Transverse colon (tissue), 4 donors: ENCODE measurements at regions of chr4 and their contacts with region 1.

Region 1: GRCh38 chr4:122341906-122342305 is 36.9 kb upstream of the ADAD1 start:
- DNase-seq: no peak
- H3K4me3 ChIP-seq: no peak overlapping the region
- H3K27ac ChIP-seq: no peak overlapping the region
- H3K4me1 ChIP-seq: no peaks in the 10 kb centered on the region
- H3K27me3 ChIP-seq: no peaks in the 10 kb centered on the region
- CTCF ChIP-seq: no peak
- EP300 ChIP-seq: no peak
- POLR2A ChIP-seq: no peak

Region 2: GRCh38 chr4:122246551-122246950 is 95.4 kb before region 1 on chr4:
- in situ Hi-C with region 1: loop called in 1 of 4 experiments (anchors 25 kb)
- intact Hi-C with region 1: no loop called
- DNase-seq: no peak
- H3K4me3 ChIP-seq: no peak overlapping the region
- H3K27ac ChIP-seq: no peak overlapping the region
- H3K4me1 ChIP-seq: no peaks in the 10 kb centered on the region
- H3K27me3 ChIP-seq: no peaks in the 10 kb centered on the region
- CTCF ChIP-seq: no peak
- EP300 ChIP-seq: no peak
- POLR2A ChIP-seq: no peak

Region 3: DNA sequence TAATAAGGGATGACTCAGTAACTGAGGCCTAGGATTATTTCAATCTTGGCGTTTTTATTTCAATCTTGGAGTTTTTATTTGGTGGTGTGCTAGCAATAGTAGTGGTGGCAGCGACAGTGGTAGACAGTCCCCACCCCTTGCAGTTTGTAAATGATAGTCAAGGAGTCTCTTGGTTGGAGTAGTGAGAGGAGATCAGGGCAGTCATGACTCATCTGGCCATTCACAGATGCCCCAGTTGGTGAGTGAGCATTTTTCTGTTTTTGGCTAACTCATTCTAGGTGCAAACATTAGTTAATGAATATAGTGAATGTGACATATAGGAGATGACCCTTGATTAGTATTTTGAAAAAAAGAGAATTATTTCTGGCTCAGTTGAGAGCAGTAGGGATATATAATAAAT is 56.6 kb before region 1 on chr4:
- in situ Hi-C with region 1: no loop called
- intact Hi-C with region 1: no loop called
- DNase-seq: no peak
- H3K4me3 ChIP-seq: no peak overlapping the region
- H3K27ac ChIP-seq: no peak overlapping the region
- H3K4me1 ChIP-seq: no peaks in the 10 kb centered on the region
- H3K27me3 ChIP-seq: no peaks in the 10 kb centered on the region
- CTCF ChIP-seq: no peak
- EP300 ChIP-seq: no peak
- POLR2A ChIP-seq: no peak